Ovary (tissue), 10 donors: ENCODE measurements at regions of chr2 and their contacts with region 1.

Region 1: DNA sequence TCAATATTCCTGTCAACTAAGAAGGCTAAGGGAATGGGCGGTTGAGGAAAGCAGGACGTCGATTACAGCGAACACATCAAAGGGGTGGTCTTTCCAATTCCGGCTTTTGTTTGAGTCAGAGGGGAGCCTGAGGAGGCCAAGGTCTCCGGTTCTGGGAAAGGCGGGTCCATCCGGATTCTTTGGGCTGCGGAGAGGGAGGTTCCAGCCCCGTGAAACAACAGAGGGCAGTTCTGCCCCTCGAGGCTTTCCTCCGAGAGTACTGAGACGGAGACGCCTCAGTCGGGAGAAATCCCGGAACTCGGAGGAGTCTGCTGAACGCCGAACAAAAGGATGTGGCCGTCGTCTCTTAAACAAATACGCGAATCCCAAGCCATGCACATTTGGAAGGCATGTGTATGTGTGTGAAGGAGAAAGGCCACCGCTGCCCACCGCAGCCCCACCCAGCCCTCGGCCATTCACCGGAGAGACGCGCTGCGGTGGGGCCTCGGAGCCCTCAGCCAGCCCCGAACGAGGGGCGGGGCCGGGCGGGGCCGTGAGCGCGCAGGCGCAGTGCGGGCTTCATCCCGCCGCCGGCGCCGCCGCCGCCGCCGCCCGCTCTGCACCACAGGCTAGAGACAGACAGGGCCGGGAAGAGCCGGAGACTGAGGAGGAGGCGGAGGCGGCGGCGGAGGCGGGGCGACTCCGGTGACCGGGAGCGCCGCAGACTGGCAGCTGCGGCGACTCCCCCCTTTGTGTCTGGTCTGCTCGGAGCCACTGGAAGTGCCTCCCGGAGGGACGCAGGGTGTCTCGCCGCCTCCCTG is at the start of gene BMPR2:
- DNase-seq: peak; percentile 87 to 93 (median 90)
- H3K4me3 ChIP-seq: peak within 1 kb of the TSS; percentile 63
- H3K27ac ChIP-seq: peak within 1 kb of the TSS; percentile 89 to 98
- H3K4me1 ChIP-seq: peaks cover 3% of the 10 kb centered on the region
- H3K27me3 ChIP-seq: no peaks in the 10 kb centered on the region
- CTCF ChIP-seq: no peak
- EP300 ChIP-seq: peak; percentile 64
- POLR2A ChIP-seq: peak; percentile 88
- total RNA-seq, gene BMPR2: 37.8 to 55.5 (median 48.2) TPM

Region 2: DNA sequence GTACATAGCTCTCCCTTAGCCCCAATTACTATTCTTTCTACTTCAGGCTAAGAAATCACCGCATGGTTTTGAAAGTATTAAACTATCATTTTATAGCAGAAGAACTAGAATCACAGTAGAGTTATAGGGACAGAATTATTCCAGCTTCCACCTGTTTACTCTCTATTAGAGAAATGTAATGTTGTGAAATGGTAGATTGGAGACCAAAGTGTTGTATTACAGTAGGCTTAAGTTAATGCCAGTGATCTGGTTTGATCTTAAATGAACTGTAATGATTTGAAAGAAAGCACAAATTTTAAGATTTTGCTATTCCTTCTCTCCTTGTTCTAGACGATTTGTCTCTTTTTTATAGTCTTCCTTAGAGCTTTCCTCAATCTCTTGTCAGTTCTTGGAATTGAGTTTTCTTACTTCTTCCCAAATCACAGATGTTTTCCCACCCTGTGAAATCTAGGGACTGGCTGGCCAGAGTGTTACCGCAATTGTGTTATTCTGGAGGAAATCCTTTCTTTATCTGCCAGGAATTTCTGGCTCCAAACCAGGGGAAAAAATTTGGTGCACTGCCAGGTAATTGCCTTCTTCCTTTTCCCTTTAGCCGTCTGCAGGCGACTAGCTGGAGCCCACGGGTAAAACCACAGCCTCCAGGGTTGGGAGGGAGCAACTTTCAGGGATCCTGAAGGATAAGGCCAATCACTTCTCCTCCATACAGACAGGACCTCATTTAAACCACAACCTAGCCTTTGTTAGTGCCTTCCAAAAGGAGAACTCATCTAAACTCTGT is 58.5 kb before region 1 on chr2:
- intact Hi-C with region 1: loop called in 1 of 4 experiments (anchors 5 kb)
- DNase-seq: peak; percentile 66 to 81 (median 72)
- H3K4me3 ChIP-seq: no peak overlapping the region
- H3K27ac ChIP-seq: peak overlapping the region in 1 of 2 donors; percentile 24
- H3K4me1 ChIP-seq: peaks cover 1% of the 10 kb centered on the region
- H3K27me3 ChIP-seq: no peaks in the 10 kb centered on the region
- CTCF ChIP-seq: no peak
- EP300 ChIP-seq: peak; percentile 74
- POLR2A ChIP-seq: no peak